ENCODE measurements at regions of chr7 and their contacts with region 1.

Region 1: GRCh38 chr7:53422291-53422690 is 386.9 kb downstream of the POM121L12 start:
- DNase-seq: no peak
- ATAC-seq: no peak
- H3K4me3 ChIP-seq: no peak overlapping the region
- H3K27ac ChIP-seq: no peak overlapping the region
- H3K4me1 ChIP-seq: no peaks in the 10 kb centered on the region
- H3K27me3 ChIP-seq: no peaks in the 10 kb centered on the region
- CTCF ChIP-seq: no peak
- POLR2A ChIP-seq: no peak

Region 2: GRCh38 chr7:53350241-53350640 is 72.0 kb before region 1 on chr7:
- intact Hi-C with region 1: no loop called
- DNase-seq: peak in 1 of 5 donors; percentile 18
- ATAC-seq: no peak
- H3K4me3 ChIP-seq: no peak overlapping the region
- H3K27ac ChIP-seq: no peak overlapping the region
- H3K4me1 ChIP-seq: no peaks in the 10 kb centered on the region
- H3K27me3 ChIP-seq: no peaks in the 10 kb centered on the region
- CTCF ChIP-seq: peak in 11 of 12 donors; percentile 10 to 52 (median 30)
- POLR2A ChIP-seq: no peak

Region 3: DNA sequence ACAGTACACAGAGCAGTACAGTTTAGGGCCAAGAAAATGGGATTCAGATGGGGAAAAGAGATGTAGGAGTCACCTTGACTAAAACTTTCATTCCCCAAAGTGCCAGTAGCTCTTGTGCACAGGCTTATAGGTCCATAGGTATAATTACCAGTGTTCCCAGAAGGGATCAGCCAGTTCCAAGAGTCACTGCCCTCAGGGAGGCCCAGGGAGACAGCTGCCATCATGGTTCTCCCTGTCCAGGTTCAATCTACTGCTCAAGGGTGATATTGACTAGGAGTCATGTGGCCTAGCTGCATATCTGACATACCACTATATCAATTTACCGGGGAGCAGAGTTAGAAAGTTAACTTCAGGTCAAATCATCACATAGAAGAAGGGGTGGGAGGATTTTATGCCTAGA is 56.0 kb before region 1 on chr7:
- intact Hi-C with region 1: loop called in 1 of 10 experiments (anchors 10 kb)
- DNase-seq: no peak
- ATAC-seq: no peak
- H3K4me3 ChIP-seq: no peak overlapping the region
- H3K27ac ChIP-seq: no peak overlapping the region
- H3K4me1 ChIP-seq: no peaks in the 10 kb centered on the region
- H3K27me3 ChIP-seq: no peaks in the 10 kb centered on the region
- CTCF ChIP-seq: no peak
- POLR2A ChIP-seq: no peak